ENCODE measurements at regions of chr2 and their contacts with region 1.

Region 1: DNA sequence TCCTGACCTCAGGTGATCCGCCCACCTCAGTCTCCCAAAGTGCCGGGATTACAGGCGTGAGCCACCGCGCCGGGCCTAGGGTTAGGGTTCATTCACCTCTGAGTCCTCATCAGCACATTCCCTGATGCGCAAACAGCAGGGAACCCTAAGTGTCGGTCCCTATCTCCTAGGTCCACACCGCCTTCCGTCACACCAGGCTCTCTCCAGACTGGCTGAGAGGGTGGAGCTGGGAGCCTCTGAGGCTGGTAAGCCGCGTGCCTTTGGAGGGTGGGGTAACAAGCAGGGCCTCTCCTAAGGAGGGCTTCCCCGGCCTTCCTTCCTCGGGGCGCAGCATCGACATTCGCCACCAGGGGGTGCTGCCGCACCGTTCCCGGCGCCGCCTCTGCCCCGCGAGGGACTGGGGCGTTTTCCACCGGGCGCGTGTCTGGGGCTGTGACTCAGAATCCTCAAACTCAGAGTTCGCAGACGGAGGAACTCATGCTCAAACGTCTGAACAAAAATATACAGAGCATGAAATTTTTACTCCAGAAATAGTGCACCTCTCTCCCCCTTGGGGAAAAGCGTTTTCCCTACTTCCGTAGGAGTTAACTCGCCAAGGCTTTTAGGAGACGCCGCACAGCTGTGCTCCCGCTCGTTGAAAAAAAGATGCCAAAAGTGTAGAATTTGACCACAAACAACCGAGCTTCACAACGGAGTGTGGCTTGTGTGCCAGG is 63.9 kb upstream of the ASAP2 start:
- DNase-seq: peak; percentile 87 to 90
- ATAC-seq: peak; percentile 84 to 95 (median 91)
- H3K4me3 ChIP-seq: peak overlapping the region in 7 of 10 donors; percentile 12 to 47 (median 24)
- H3K27ac ChIP-seq: peak overlapping the region in 9 of 10 donors; percentile 6 to 67 (median 42)
- H3K4me1 ChIP-seq: peaks cover 5 to 15% (median 10%) of the 10 kb centered on the region in 9 donors
- H3K27me3 ChIP-seq: peaks cover 0 to 5% (median 0%) of the 10 kb centered on the region in 7 donors
- CTCF ChIP-seq: peak in 7 of 9 donors; percentile 98 to 100 (median 99)

Region 2: DNA sequence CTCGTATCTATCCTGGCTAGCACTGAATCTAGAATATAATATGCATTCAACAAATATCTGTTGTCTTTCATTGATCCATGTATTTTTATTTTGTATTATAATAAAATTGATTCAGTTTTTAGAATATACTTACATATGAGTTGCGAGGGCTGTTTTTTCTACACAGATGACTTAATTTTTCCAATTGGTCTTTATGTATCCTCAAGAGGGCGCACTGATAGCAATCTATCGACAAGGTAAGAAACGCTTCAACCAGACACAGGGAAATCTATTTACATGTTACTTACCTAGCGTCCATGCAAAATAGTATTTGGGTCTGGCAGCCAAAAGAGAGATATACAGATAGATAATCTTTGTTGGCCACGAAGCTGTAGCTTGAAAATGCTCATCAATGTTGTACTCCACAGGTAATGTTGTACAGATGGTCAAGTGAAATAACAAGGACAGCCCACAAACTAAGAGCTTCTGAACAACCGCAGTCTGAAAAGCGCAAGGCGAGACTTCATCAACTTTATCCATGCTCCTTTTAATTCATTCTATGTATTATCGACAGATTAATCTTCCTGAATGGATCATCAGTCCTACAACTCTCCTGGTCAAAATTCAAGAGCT is 269.8 kb before region 1 on chr2:
- intact Hi-C with region 1: loop called in 9 of 10 experiments (anchors 2 to 10 kb)
- DNase-seq: no peak
- ATAC-seq: peak in 1 of 8 donors; percentile 37
- H3K4me3 ChIP-seq: no peak overlapping the region
- H3K27ac ChIP-seq: no peak overlapping the region
- H3K4me1 ChIP-seq: no peaks in the 10 kb centered on the region
- H3K27me3 ChIP-seq: no peaks in the 10 kb centered on the region
- CTCF ChIP-seq: peak in 8 of 9 donors; percentile 25 to 68 (median 58)

Region 3: GRCh38 chr2:9199716-9200632 is 57.3 kb after region 1 on chr2:
- intact Hi-C with region 1: loop called in 5 of 10 experiments (anchors 5 to 10 kb)
- DNase-seq: no peak
- ATAC-seq: no peak
- H3K4me3 ChIP-seq: no peak overlapping the region
- H3K27ac ChIP-seq: no peak overlapping the region
- H3K4me1 ChIP-seq: no peaks in the 10 kb centered on the region
- H3K27me3 ChIP-seq: no peaks in the 10 kb centered on the region
- CTCF ChIP-seq: no peak

Region 4: GRCh38 chr2:9333591-9334171 is 191.0 kb after region 1 on chr2:
- intact Hi-C with region 1: loop called in 9 of 10 experiments (anchors 1 to 10 kb)
- DNase-seq: peak; percentile 28 to 73
- ATAC-seq: peak; percentile 74 to 85 (median 81)
- H3K4me3 ChIP-seq: no peak overlapping the region
- H3K27ac ChIP-seq: peak overlapping the region in 3 of 10 donors; percentile 1 to 39 (median 13)
- H3K4me1 ChIP-seq: peaks cover 0 to 59% (median 36%) of the 10 kb centered on the region in 9 donors
- H3K27me3 ChIP-seq: no peaks in the 10 kb centered on the region
- CTCF ChIP-seq: peak; percentile 44 to 87 (median 69)

Region 5: DNA sequence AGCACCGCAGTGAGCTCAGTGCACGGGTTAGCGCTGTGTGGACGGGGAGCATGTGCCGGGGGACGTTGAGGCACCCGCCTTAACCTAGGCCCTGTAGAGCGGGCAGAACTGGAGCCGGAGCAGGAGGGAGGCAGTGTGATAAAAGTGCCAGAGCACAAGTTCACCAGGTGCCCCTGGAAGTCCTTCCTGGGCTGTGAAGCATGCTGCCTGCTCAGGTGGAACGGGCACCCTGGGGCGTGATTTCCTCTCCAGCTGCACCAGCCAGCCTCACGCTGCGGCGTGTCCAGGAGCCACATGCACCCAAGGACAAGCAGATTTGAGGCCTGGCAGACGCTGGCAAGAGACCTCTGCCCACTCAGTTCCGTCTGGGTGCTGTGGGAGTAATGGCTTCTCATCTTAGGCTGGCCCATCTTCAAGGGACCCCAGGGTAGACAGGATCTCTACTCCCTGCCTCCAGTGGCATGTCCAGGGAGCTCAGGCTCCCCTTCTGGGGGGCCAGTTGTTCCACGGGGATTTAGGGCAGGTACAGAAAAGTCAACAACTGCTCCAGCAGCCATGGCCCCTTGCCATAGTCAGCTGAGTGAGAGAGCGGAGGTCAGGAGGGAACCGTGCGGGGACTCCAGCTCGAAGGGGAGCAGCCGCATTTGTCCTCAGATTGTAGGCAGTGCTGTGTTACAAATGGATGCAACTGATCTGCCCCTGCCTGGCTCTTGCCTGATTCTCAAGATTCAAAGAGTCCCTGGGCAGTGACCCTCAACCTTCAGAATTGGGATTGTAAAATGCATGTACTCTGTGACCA is 230.6 kb after region 1 on chr2:
- intact Hi-C with region 1: loop called in 2 of 10 experiments (anchors 5 to 10 kb)
- DNase-seq: no peak
- ATAC-seq: no peak
- H3K4me3 ChIP-seq: no peak overlapping the region
- H3K27ac ChIP-seq: no peak overlapping the region
- H3K4me1 ChIP-seq: peaks cover 0 to 20% (median 15%) of the 10 kb centered on the region in 9 donors
- H3K27me3 ChIP-seq: no peaks in the 10 kb centered on the region
- CTCF ChIP-seq: no peak

Region 6: GRCh38 chr2:9423100-9423921 is 280.6 kb after region 1 on chr2 and contains the starts of genes CPSF3 and ITGB1BP1:
- intact Hi-C with region 1: loop called in 5 of 10 experiments (anchors 2 to 10 kb)
- DNase-seq: peak; percentile 98 to 99
- ATAC-seq: peak; percentile 95 to 98 (median 97)
- H3K4me3 ChIP-seq: peak within 1 kb of the TSS; percentile 49 to 96 (median 91)
- H3K27ac ChIP-seq: peak within 1 kb of the TSS; percentile 59 to 97 (median 95)
- H3K4me1 ChIP-seq: peaks cover 6 to 54% (median 41%) of the 10 kb centered on the region in 9 donors
- H3K27me3 ChIP-seq: no peaks in the 10 kb centered on the region
- CTCF ChIP-seq: peak in 4 of 9 donors; percentile 16 to 22 (median 20)
- total RNA-seq, gene CPSF3: 12.8 to 19.8 (median 16.5) TPM
- total RNA-seq, gene ITGB1BP1: 51.4 to 224 (median 134) TPM

Measured in heart right ventricle (tissue), 16 donors.